ENCODE measurements at regions of chr13 and their contacts with region 1.

Region 1: DNA sequence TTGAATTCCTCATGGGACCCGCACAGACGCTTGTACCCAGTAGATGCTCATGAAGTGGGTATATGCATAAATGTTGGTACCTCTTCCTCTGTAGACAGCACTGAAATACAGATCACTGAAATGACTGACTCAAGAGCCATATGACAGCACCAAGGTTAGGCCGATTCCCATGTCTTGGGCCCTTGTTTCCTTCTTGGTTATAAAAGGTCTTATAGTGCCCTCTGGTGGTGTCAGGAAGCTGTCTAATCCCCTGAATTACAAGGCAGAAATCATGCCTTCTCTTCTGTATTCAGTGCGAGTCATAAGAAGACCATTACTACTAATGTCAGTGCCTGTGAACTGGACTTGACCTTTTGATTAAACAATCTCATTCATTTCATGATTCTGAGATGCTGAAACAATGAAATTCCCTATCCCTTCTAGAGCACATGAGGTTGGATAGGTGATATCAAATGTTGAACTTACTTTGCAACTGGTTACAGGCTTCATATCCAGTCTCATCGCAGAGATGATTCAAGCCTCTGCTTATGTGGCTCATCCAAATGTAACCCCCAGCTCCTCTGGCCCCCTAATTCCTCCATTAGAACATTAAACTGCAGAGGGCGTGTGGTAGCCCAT is 59.7 kb downstream of the SPATA13 start:
- H3K4me3 ChIP-seq: no peak overlapping the region
- H3K27ac ChIP-seq: no peak overlapping the region
- H3K4me1 ChIP-seq: no peaks in the 10 kb centered on the region
- CTCF ChIP-seq: peak; percentile 37; the same call in 1 of the 2 replicates

Region 2: DNA sequence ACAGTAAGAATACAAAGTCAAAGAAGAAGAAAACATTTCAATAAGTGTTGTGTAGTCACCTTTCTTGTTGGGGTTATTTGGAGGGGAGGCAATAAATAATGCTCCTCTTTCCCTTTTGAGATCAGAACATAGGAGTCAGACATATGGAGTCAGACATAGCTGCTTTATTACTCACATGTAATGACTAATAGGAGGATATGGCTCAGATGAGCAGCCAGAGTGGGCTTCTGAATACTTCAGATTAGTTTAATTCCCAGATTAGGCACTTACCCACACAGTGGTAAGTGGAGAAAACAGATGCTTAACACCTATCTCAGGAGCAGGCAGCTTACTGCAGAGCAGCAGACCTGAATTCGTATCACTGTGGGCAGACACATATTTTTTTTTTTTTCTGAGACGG is 291.2 kb before region 1 on chr13:
- CTCF ChIA-PET with region 1: no interaction called
- POLR2A ChIA-PET with region 1: no interaction called
- H3K4me3 ChIP-seq: no peak overlapping the region
- H3K27ac ChIP-seq: no peak overlapping the region
- H3K4me1 ChIP-seq: no peaks in the 10 kb centered on the region
- CTCF ChIP-seq: no peak

Region 3: GRCh38 chr13:24020375-24020830 is 199.8 kb before region 1 on chr13:
- CTCF ChIA-PET with region 1: interaction called, 36 read pairs
- POLR2A ChIA-PET with region 1: no interaction called
- H3K4me3 ChIP-seq: no peak overlapping the region
- H3K27ac ChIP-seq: no peak overlapping the region
- H3K4me1 ChIP-seq: no peaks in the 10 kb centered on the region
- CTCF ChIP-seq: no peak

Region 4: GRCh38 chr13:24053519-24054251 is 166.5 kb before region 1 on chr13:
- CTCF ChIA-PET with region 1: interaction called, 32 read pairs
- POLR2A ChIA-PET with region 1: no interaction called
- H3K4me3 ChIP-seq: no peak overlapping the region
- H3K27ac ChIP-seq: no peak overlapping the region
- H3K4me1 ChIP-seq: no peaks in the 10 kb centered on the region
- CTCF ChIP-seq: peak; percentile 39; the same call in 1 of the 2 replicates

Measured in HEK293 (cell line).